Gastrocnemius medialis (tissue), 4 donors: ENCODE measurements at regions of chr3 and their contacts with region 1.

Region 1: DNA sequence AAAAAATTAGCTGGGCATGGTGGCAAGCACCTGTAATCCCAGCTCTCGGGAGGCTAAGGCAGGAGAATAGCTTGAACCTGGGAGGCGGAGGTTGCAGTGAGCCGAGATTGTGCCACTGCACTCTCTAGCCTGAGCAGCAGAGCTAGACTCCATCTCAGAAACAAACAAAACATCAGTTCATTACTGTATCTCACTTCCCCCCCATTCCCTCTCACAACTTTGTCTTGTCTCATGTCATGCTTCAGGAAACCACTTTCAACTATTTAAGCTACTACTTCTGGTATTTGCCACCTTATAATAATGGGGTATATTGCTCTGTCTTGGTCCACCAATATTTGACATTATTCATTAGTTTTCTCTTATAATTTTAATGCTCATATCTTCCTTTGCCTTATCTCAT is 26.2 kb downstream of the PIK3CA start:
- DNase-seq: no peak
- ATAC-seq: no peak
- H3K4me3 ChIP-seq: no peak overlapping the region
- H3K27ac ChIP-seq: no peak overlapping the region
- H3K4me1 ChIP-seq: peaks cover 14 to 15% of the 10 kb centered on the region in 2 donors
- H3K27me3 ChIP-seq: no peaks in the 10 kb centered on the region
- CTCF ChIP-seq: no peak
- POLR2A ChIP-seq: no peak

Region 2: DNA sequence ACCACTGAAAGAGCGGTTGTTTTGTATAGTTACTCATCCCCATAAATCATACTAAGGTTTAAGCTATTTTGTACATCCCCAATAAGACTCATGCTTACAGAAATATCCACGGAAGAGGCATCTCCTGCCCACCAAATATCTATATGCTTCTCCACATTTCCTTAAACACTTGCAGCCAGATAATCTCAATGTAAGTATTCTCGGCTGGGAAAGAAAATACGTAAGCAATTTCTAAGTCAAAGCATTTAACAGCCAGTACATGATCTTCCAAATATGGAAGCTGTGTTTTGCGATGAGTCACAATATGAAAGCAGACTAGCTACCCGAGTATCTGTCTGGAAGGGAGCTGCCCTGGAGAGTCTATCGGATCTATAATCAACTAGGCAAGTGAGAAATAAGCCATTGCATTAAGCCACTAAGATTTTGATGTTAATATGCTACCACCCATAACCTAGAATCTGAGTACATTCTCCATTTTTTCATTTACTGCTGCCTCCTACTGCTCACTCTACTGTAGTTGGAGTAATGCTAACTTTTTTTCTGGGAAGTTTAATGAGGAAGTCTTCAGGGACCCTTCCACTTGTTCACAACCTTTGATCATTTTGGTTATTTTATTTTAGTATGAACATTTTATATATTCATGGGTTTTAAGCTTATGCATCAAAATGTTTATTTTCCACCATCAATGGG is 75.8 kb before region 1 on chr3:
- in situ Hi-C with region 1: no loop called
- intact Hi-C with region 1: no loop called
- DNase-seq: no peak
- ATAC-seq: no peak
- H3K4me3 ChIP-seq: no peak overlapping the region
- H3K27ac ChIP-seq: no peak overlapping the region
- H3K4me1 ChIP-seq: no peaks in the 10 kb centered on the region
- H3K27me3 ChIP-seq: no peaks in the 10 kb centered on the region
- CTCF ChIP-seq: no peak
- POLR2A ChIP-seq: no peak

Region 3: DNA sequence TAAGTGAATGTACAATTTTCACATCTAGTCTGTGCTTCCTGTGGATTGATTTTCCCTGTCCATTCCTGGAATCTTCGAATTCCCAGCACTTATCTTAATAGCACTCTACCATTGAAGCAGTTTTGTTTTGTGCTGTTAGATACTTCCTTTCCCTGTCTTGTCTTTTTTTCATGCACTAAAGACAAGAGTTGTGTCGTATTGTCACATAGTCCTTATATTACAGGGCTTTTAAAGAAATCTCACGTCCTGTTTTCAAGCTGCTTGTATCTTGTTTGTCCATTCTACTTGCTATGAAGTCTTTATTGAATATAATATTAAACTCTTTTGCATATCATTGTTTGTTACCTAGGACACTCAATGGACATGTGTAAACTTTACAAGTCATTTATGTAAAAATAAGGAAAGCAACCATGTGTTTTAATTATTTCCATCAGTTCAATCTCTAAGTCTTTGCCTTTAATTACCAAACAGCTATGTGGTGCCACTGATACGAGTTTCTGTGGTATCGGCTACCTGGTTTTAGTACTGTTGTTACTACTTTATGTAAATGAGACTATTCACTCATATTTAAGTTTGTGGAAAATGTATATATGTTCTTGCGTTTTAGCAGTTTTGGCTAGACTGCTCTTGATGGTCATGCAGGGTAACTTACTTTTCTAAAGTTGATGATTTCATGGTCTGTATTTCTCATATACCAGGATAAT is 15.8 kb before region 1 on chr3:
- in situ Hi-C with region 1: no loop called
- intact Hi-C with region 1: loop called (anchors 2 kb)
- DNase-seq: no peak
- ATAC-seq: no peak
- H3K4me3 ChIP-seq: no peak overlapping the region
- H3K27ac ChIP-seq: no peak overlapping the region
- H3K4me1 ChIP-seq: peaks cover 21 to 47% of the 10 kb centered on the region in 2 donors
- H3K27me3 ChIP-seq: no peaks in the 10 kb centered on the region
- CTCF ChIP-seq: no peak
- POLR2A ChIP-seq: no peak